Vagina (tissue), 2 donors: ENCODE measurements at regions of chr2 and their contacts with region 1.

Region 1: DNA sequence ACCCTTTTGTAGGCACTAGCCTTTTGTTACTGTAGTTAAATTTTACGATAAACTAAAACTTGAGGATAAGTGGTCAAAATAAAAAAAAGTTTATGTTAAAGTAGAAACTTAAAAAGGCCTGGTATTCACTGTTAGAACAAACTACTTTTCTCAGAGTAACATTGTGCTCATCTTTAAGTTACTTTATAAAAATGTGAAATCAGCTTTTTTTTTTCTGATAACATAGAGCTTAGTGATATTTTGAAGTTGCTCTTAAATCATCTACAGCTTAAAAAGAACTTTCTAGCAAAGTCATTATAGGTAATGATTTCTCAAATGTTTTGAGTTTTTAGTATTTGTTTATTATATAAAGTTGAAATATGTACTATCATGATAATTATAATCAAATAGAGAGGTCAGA is 125.3 kb downstream of the CAMKMT start:
- DNase-seq: no peak
- H3K4me3 ChIP-seq: no peak overlapping the region
- H3K27ac ChIP-seq: no peak overlapping the region
- H3K4me1 ChIP-seq: no peaks in the 10 kb centered on the region
- H3K27me3 ChIP-seq: no peaks in the 10 kb centered on the region
- CTCF ChIP-seq: no peak
- POLR2A ChIP-seq: no peak

Region 2: GRCh38 chr2:44560352-44560751 is 73.3 kb after region 1 on chr2:
- intact Hi-C with region 1: no loop called
- DNase-seq: no peak
- H3K4me3 ChIP-seq: no peak overlapping the region
- H3K27ac ChIP-seq: no peak overlapping the region
- H3K4me1 ChIP-seq: no peaks in the 10 kb centered on the region
- H3K27me3 ChIP-seq: no peaks in the 10 kb centered on the region
- CTCF ChIP-seq: no peak
- POLR2A ChIP-seq: no peak

Region 3: DNA sequence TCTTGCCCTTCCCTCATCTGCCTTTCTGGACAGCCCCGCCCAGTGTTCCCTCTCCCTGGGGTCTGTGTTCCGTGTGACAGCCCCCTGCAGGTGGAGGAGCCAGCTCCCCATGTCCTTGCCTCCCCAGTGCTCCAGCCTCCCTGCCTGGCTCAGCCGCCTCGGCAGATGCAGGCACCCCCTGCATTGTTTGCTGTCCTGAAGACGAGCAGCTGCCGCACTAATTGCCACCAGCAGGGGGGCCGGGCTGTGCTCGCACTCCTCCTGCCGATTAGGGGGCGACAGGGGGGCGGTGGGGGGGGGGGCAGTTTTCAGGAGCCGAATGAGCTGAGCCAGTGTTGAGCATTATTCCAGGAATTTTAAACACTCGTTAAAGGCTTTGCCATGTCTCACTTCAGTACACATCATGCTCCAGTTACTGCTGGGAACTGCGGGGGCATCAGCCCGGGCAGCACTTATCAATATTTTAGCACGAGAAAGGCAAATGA is 477.7 kb after region 1 on chr2:
- intact Hi-C with region 1: loop called (anchors 5 kb)
- DNase-seq: no peak
- H3K4me3 ChIP-seq: no peak overlapping the region
- H3K27ac ChIP-seq: peak overlapping the region; percentile 59
- H3K4me1 ChIP-seq: peaks cover 13% of the 10 kb centered on the region
- H3K27me3 ChIP-seq: no peaks in the 10 kb centered on the region
- CTCF ChIP-seq: no peak
- POLR2A ChIP-seq: no peak